SK-N-SH (cell line): ENCODE measurements at regions of chr1 and their contacts with region 1.

Region 1: GRCh38 chr1:54810100-54810942 is 9.2 kb upstream of the TTC22 start:
- DNase-seq: peak; percentile 93
- H3K4me3 ChIP-seq: no peak overlapping the region; a peak in 1 of 4 replicates
- H3K27ac ChIP-seq: no peak overlapping the region
- H3K4me1 ChIP-seq: peaks cover 0 to 2% of the 10 kb centered on the region in 2 experiments; a peak in 1 of 4 replicates
- H3K27me3 ChIP-seq: no peaks in the 10 kb centered on the region
- CTCF ChIP-seq: peak; percentile 86
- EP300 ChIP-seq: no peak
- RAD21 ChIP-seq: peak; percentile 99

Region 2: DNA sequence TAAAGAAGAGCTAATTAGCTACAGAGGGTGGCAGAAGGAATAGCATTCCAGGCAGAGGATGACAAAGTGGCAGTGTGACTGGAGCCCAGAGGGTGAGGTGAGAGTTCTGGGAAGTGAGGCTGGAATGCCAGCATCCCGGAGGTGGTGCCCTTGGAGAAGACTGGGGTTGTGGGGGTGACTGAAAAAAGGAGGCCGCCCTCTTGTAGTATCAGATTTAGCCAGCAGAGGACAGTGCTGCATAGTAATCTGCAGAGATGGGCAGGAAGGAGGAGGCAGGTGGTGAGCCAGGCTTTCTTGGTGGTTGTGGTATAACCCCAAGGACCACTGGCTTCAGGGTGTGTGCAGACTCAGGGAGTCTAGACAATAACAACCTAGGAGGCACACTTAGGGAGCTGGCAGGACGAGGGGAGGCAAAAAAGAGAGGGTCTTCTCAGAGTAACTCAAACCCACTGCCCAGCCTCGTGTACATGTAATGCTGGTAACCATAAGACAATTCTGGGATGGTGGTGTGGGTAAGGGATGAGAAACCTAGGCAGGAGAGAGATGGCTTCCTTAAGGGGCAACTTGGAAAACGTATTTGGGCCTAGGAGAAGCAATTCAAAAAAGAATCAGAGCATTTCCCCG is 138.2 kb before region 1 on chr1:
- CTCF ChIA-PET with region 1: interaction called, 20 read pairs
- POLR2A ChIA-PET with region 1: no interaction called
- DNase-seq: peak; percentile 78
- H3K4me3 ChIP-seq: peak overlapping the region in 1 of 2 experiments; percentile 41; a peak in 1 of 4 replicates
- H3K27ac ChIP-seq: no peak overlapping the region
- H3K4me1 ChIP-seq: no peaks in the 10 kb centered on the region
- H3K27me3 ChIP-seq: no peaks in the 10 kb centered on the region; the same call in 1 of the 2 replicates
- CTCF ChIP-seq: peak; percentile 82
- EP300 ChIP-seq: no peak
- RAD21 ChIP-seq: peak; percentile 89

Region 3: GRCh38 chr1:54764133-54764921 is 46.0 kb before region 1 on chr1 and contains the start of gene PARS2:
- CTCF ChIA-PET with region 1: interaction called, 14 read pairs
- POLR2A ChIA-PET with region 1: no interaction called
- DNase-seq: peak; percentile 97
- H3K4me3 ChIP-seq: peak within 1 kb of the TSS; percentile 94
- H3K27ac ChIP-seq: peak within 1 kb of the TSS; percentile 77 to 79
- H3K4me1 ChIP-seq: peaks cover 8 to 12% of the 10 kb centered on the region in 2 experiments; a peak in 3 of 4 replicates
- H3K27me3 ChIP-seq: no peaks in the 10 kb centered on the region
- CTCF ChIP-seq: no peak
- EP300 ChIP-seq: no peak; a peak in 1 of 4 replicates
- RAD21 ChIP-seq: no peak
- polyA plus RNA-seq, gene PARS2: 3.2 and 3.4 TPM in 2 replicates

Region 4: GRCh38 chr1:54838565-54839180 is 28.4 kb after region 1 on chr1:
- CTCF ChIA-PET with region 1: no interaction called
- POLR2A ChIA-PET with region 1: no interaction called
- DNase-seq: no peak
- H3K4me3 ChIP-seq: no peak overlapping the region
- H3K27ac ChIP-seq: no peak overlapping the region
- H3K4me1 ChIP-seq: no peaks in the 10 kb centered on the region
- H3K27me3 ChIP-seq: no peaks in the 10 kb centered on the region
- CTCF ChIP-seq: no peak
- EP300 ChIP-seq: no peak
- RAD21 ChIP-seq: no peak